ENCODE measurements at regions of chr11 and their contacts with region 1.

Region 1: GRCh38 chr11:11806586-11806985 is 35.2 kb upstream of the USP47 start:
- DNase-seq: no peak
- ATAC-seq: peak; percentile 40 to 54
- H3K4me3 ChIP-seq: no peak overlapping the region
- H3K27ac ChIP-seq: no peak overlapping the region
- H3K4me1 ChIP-seq: no peaks in the 10 kb centered on the region
- H3K27me3 ChIP-seq: no peaks in the 10 kb centered on the region

Region 2: DNA sequence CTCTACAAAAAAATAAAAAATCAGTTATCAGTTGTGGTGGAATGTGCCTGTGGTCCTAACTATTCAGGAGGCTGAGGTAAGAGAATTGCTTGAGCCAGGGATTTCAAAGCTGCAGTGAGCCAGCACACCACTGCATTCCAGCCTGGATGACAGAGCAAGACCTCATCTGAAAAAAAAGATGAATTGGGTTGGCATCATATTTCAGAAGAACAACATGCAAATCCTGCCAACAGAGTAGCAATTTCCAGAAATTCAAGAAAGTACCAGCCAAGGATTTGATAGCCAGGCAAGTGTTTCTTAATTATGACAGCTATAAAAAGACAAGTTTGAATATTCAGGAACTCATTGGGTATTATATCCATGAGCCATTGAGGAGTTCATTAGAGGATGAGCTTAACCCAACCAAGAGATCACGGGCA is 110.4 kb after region 1 on chr11:
- intact Hi-C with region 1: loop called in 1 of 4 experiments (anchors 10 kb)
- DNase-seq: peak in 1 of 3 donors; percentile 39
- ATAC-seq: peak; percentile 36 to 71
- H3K4me3 ChIP-seq: no peak overlapping the region
- H3K27ac ChIP-seq: no peak overlapping the region
- H3K4me1 ChIP-seq: peaks cover 1% of the 10 kb centered on the region
- H3K27me3 ChIP-seq: no peaks in the 10 kb centered on the region

Region 3: GRCh38 chr11:12024254-12024926 is 217.8 kb after region 1 on chr11:
- intact Hi-C with region 1: no loop called
- DNase-seq: no peak
- ATAC-seq: no peak
- H3K4me3 ChIP-seq: no peak overlapping the region
- H3K27ac ChIP-seq: no peak overlapping the region
- H3K4me1 ChIP-seq: no peaks in the 10 kb centered on the region
- H3K27me3 ChIP-seq: no peaks in the 10 kb centered on the region

Measured in right cardiac atrium (tissue), 5 donors.